Breast epithelium (tissue), 4 donors: ENCODE measurements at regions of chr3 and their contacts with region 1.

Region 1: GRCh38 chr3:124559881-124560574 is 170.2 kb upstream of the UMPS start:
- DNase-seq: peak; percentile 59 to 60
- H3K4me3 ChIP-seq: no peak overlapping the region
- H3K27ac ChIP-seq: peak overlapping the region in 1 of 2 donors; percentile 21
- H3K4me1 ChIP-seq: peaks cover 0 to 7% of the 10 kb centered on the region in 2 donors
- H3K27me3 ChIP-seq: no peaks in the 10 kb centered on the region
- CTCF ChIP-seq: peak; percentile 29 to 79 (median 68)
- POLR2A ChIP-seq: no peak

Region 2: DNA sequence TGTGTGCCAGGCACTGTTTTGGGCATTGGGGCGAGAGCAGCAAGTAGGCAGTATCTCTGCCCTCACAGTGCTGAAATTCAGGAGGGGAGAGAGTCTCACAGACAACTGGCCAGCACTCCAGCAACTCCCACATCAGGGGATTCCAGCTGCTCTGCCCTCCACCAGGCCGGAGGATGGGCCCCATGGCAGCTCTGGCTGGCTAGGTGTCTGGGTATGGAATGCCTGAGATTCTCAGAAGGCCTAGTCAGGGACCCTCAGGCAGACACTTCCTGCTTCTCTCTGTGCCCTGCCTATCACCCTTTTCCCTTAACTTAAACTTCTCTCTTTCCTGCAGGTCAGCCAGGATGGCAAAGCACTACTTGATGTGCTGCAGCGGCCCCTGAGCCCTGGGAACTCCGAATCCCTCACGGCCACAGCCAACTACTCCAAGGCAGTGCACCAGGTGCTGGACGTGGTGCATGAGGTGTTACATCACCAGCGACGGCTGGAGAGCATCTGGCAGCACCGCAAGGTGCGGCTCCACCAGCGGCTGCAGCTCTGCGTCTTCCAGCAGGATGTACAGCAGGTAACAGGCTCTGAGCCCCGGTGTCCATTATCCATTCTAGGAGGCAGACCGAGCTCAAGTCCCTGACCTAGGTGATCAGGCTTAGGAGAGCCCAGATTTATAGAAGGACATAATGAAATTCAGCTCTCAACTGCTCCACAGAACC is 225.9 kb before region 1 on chr3:
- intact Hi-C with region 1: no loop called
- DNase-seq: no peak
- H3K4me3 ChIP-seq: no peak overlapping the region
- H3K27ac ChIP-seq: no peak overlapping the region
- H3K4me1 ChIP-seq: no peaks in the 10 kb centered on the region
- H3K27me3 ChIP-seq: no peaks in the 10 kb centered on the region
- CTCF ChIP-seq: no peak
- POLR2A ChIP-seq: no peak

Region 3: DNA sequence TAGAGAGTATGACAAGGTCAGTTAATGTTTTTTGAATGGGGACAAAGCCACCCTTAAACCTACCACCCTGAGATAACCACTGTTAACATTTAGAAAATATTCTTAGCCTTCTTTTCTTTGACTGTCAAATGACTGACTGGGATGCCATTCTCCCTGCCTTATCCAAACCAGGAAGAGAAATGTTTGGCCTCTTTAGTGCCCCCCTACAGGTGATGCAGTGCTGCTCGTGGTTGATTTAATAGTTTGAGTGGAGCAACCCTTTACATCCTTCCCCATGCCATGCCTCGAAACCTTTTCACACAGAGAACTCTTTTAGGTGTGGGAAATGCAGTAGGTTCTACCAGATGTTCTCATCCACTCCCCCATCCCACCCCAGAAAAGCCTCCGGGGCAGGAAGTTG is 131.6 kb after region 1 on chr3:
- intact Hi-C with region 1: loop called (anchors 5 kb)
- DNase-seq: no peak
- H3K4me3 ChIP-seq: no peak overlapping the region
- H3K27ac ChIP-seq: no peak overlapping the region
- H3K4me1 ChIP-seq: no peaks in the 10 kb centered on the region
- H3K27me3 ChIP-seq: no peaks in the 10 kb centered on the region
- CTCF ChIP-seq: no peak
- POLR2A ChIP-seq: no peak